GM12878 (cell line): ENCODE measurements at regions of chr14 and their contacts with region 1.

Region 1: DNA sequence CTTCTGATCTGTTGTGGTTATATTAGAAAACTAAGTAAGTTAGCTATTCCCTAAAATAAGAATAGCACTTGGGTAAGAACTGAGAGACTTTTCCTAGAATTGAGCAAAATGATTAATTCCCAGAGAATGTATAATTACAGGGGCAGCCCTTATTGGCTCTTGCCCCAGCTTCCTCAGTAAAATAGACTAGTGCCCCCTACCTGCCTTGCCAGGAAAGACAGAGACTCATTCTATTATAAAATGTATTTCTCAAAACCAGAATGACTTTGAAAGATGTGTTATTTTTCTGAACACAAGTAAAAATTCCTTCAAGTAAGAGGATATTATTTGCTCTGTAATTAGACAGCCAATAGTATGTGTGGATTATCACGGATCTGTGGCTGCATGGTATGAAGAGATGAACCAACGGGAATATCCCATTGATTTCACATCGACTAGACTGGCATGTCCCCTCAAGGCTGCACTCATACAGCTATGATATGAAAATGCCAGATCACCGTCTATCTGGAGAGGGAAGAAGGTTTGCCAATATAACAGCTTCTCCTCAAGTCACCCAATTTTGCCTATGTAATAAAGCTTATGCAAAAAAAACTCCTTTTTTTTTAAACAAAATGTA is 7.4 kb upstream of the GLRX5 start:
- DNase-seq: no peak
- ATAC-seq: peak; percentile 71
- H3K4me3 ChIP-seq: no peak overlapping the region
- H3K27ac ChIP-seq: no peak overlapping the region
- H3K4me1 ChIP-seq: no peaks in the 10 kb centered on the region; the same call in 1 of the 2 replicates
- H3K27me3 ChIP-seq: no peaks in the 10 kb centered on the region
- CTCF ChIP-seq: peak; percentile 59 to 74 (median 71); a peak in 5 of 6 replicates
- EP300 ChIP-seq: no peak
- POLR2A ChIP-seq: no peak
- RAD21 ChIP-seq: peak; percentile 82

Region 2: GRCh38 chr14:95452176-95452892 is 75.2 kb before region 1 on chr14:
- CTCF ChIA-PET with region 1: interaction called, 525 read pairs
- POLR2A ChIA-PET with region 1: no interaction called
- RAD21 ChIA-PET with region 1: interaction called, 171 read pairs
- SMC1A ChIA-PET with region 1: interaction called, 187 read pairs
- in situ Hi-C with region 1: no loop called
- intact Hi-C with region 1: no loop called
- DNase-seq: no peak
- ATAC-seq: peak; percentile 88
- H3K4me3 ChIP-seq: no peak overlapping the region
- H3K27ac ChIP-seq: no peak overlapping the region
- H3K4me1 ChIP-seq: no peaks in the 10 kb centered on the region
- H3K27me3 ChIP-seq: no peaks in the 10 kb centered on the region
- CTCF ChIP-seq: peak; percentile 28 to 43 (median 41); a peak in 4 of 6 replicates
- EP300 ChIP-seq: no peak
- POLR2A ChIP-seq: no peak
- RAD21 ChIP-seq: peak; percentile 29; the same call in 1 of the 2 replicates

Region 3: DNA sequence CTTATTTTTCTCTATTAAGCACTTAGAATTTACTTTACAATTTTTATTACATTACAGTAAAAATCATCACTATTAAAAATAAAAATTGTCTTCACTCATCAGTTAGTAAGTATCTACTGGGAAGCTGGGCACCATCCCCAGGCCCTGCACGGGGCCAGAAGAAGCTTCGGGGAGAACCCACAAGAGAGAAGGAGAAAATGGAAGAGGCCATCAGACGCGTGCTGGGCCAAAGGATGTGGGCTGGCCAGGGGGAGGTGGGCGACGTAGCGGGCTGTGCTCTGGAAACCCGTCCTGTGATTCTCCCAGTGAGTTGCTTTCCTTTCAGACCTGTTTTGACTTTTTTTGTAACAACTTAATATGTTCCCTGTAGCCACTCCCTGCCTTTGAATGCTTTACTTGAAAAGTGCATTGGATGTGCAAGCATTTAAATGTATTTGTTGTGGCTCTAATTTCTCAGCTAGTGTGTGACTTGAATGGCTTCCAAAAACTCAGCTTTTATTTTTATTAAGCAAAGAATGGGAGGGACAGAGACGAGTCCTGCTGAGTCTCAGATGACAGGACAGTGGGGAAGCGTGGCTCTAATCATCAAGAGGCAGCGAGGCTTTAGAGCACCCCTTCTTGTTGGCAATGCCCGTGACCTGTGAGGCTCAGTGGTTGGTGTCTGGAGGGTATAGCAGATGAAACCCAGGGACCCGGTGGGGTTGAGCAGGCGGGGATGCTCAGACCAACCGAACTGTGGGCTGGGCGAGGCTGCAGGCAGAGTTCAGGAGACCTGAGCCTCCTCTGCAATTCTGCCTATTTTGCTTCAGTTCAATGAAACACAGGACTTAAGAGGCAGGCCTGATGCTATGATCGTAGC is 49.9 kb before region 1 on chr14:
- CTCF ChIA-PET with region 1: interaction called, 14 read pairs
- POLR2A ChIA-PET with region 1: no interaction called
- RAD21 ChIA-PET with region 1: interaction called, 13 read pairs
- SMC1A ChIA-PET with region 1: interaction called, 15 read pairs
- in situ Hi-C with region 1: no loop called
- intact Hi-C with region 1: no loop called
- DNase-seq: no peak
- ATAC-seq: no peak
- H3K4me3 ChIP-seq: no peak overlapping the region
- H3K27ac ChIP-seq: no peak overlapping the region
- H3K4me1 ChIP-seq: peaks cover 21% of the 10 kb centered on the region
- H3K27me3 ChIP-seq: no peaks in the 10 kb centered on the region
- CTCF ChIP-seq: no peak
- EP300 ChIP-seq: no peak
- POLR2A ChIP-seq: no peak
- RAD21 ChIP-seq: no peak

Region 4: DNA sequence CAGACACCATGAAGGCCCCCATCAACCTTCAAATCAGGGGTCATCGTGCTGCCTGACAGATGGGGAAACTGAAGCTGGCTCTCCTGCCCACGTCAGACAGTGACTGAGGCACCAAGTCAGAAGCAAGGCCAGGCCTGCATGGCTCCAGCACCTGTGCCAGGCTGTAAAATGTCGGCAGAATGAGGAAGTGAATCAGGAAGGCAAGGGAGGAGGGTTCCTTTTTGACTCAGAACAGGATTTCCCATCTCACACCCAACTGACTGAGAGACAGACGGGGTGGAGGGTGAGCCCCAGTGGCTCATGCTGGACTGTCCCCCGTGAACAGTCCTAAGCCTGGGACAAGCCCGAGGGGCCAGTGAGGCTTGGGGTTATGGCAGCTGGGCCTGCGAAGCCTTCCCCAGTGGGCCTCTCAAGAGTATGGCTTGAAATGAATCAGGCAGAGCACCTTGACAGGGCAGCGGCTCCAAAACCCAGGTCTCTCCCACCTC is 31.9 kb before region 1 on chr14:
- CTCF ChIA-PET with region 1: interaction called, 8 read pairs
- POLR2A ChIA-PET with region 1: interaction called, 6 read pairs
- RAD21 ChIA-PET with region 1: interaction called, 5 read pairs
- SMC1A ChIA-PET with region 1: interaction called, 14 read pairs
- in situ Hi-C with region 1: no loop called
- intact Hi-C with region 1: loop called (anchors 5 kb)
- DNase-seq: peak; percentile 94
- ATAC-seq: peak; percentile 90
- H3K4me3 ChIP-seq: peak overlapping the region; percentile 37; the same call in 1 of the 2 replicates
- H3K27ac ChIP-seq: peak overlapping the region; percentile 98
- H3K4me1 ChIP-seq: peaks cover 60% of the 10 kb centered on the region
- H3K27me3 ChIP-seq: no peaks in the 10 kb centered on the region
- CTCF ChIP-seq: no peak
- EP300 ChIP-seq: peak; percentile 66 to 95
- POLR2A ChIP-seq: peak; percentile 66
- RAD21 ChIP-seq: peak; percentile 17; the same call in 1 of the 2 replicates

Region 5: DNA sequence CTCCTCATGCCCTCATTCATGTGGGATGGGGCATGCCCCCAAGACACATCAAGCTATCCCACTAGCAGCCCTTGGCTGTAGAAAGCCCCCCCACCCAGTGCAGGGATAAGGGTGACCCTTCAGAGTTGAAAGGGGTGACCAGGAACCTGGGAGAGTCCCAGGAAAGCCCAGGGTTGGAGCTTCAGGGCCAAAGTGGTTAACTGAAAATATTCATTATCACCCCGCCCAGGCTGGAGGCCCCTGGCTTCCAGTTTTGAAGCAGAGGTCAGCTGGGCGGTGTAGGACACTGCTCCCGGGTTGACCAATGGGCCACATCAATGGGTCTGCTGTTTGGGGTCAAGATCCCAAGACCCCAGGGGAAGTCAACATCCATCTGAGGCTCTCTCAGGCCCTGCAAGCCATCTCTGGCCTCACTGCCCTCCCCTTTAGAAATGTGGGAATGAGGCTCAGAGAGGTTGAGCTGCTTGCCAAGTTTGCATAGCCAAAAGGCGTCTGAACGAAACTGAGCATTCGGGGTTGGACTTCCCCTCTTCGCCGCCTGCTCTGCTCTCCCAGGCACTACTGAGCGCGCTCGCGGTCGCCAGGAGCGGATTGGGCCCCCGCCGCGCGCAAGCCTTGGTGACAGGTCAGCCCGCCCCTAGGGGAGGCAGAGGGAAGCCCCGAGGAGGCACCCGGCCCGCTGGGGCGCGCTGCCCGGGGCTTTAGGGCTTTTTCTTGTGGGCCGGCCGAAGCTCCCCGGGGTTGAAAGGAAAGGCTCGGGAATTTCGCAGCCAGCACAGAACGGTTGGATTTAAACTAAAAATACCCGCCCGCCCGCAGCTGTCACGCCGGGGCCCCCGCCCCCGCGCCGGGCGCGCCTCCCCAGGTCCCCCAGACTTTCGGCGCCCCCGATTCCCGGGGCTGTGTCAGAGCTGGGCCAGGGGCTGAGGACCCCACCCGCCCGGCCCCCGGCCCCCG is 11.6 kb before region 1 on chr14:
- CTCF ChIA-PET with region 1: interaction called, 55 read pairs
- POLR2A ChIA-PET with region 1: interaction called, 7 read pairs
- RAD21 ChIA-PET with region 1: interaction called, 24 read pairs
- SMC1A ChIA-PET with region 1: interaction called, 107 read pairs
- in situ Hi-C with region 1: no loop called
- intact Hi-C with region 1: no loop called
- DNase-seq: no peak
- ATAC-seq: peak; percentile 87
- H3K4me3 ChIP-seq: peak overlapping the region; percentile 85
- H3K27ac ChIP-seq: peak overlapping the region; percentile 90
- H3K4me1 ChIP-seq: peaks cover 53% of the 10 kb centered on the region
- H3K27me3 ChIP-seq: no peaks in the 10 kb centered on the region
- CTCF ChIP-seq: peak; percentile 35 to 58 (median 46)
- EP300 ChIP-seq: 0 out of 4 replicates have a peak, but pooled peaks of 1 of the 2 experiments have one; percentile 6
- POLR2A ChIP-seq: 0 out of 2 replicates have a peak, but pooled peaks have one; percentile 59
- RAD21 ChIP-seq: peak; percentile 44